B cell (primary cell): ENCODE measurements at regions of chr2 and their contacts with region 1.

Region 1: DNA sequence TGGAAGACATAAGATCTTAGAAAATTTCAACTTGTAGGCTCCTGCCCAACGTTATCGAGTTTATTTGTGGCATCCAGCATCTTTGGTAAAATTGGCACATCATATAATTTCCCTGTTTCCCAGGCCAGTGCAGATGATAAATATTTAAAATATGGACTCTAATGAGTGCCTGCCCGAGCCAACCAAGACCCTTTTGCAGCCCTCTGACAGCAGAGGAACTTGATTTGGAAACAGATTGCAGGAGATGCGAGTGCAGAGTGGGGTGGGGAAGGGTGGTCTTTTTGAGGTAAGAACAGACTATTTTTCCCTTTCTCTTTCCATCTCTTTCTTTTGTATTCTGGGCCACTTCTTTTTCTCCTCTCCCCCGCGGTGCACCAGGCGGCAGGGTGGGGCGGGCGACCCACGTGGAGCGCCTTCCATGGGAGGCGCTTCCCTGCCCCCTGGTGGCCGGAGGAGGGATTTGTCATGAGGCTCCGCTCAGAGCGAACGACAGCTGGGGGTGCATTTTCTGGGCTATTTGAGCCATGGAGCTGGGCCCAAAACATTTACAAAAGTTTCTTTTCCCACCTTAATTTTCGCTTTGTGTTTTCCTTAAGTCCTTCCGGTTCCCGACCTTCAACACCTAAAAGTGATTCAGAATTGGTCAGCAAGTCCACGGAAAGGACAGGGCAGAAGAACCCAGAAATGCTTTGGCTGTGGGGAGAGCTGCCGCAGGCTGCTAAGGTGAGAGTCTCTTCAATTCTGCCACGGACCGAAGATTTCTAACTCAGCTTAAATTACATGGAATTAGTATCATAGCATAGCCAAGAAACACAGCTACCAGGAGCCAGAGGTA is 32.7 kb downstream of the LPIN1 start:
- DNase-seq: peak; percentile 89
- ATAC-seq: peak; percentile 96
- H3K4me3 ChIP-seq: peak overlapping the region in 3 of 5 experiments; percentile 16 to 55 (median 25)
- H3K4me3 Mint-ChIP-seq: peak overlapping the region; percentile 34
- H3K27ac ChIP-seq: no peak overlapping the region
- H3K27ac Mint-ChIP-seq: no peak overlapping the region
- H3K4me1 ChIP-seq: peaks cover 18 to 26% of the 10 kb centered on the region in 2 donors
- H3K4me1 Mint-ChIP-seq: peaks cover 36% of the 10 kb centered on the region
- H3K27me3 ChIP-seq: no peaks in the 10 kb centered on the region
- H3K27me3 Mint-ChIP-seq: no peaks in the 10 kb centered on the region
- CTCF ChIP-seq: peak; percentile 97

Region 2: GRCh38 chr2:11477994-11478393 is 301.1 kb before region 1 on chr2:
- CTCF ChIA-PET with region 1: interaction called, 34 read pairs
- POLR2A ChIA-PET with region 1: no interaction called
- intact Hi-C with region 1: loop called (anchors 1 kb)
- DNase-seq: peak; percentile 82
- ATAC-seq: peak; percentile 54
- H3K4me3 ChIP-seq: no peak overlapping the region
- H3K4me3 Mint-ChIP-seq: no peak overlapping the region
- H3K27ac ChIP-seq: no peak overlapping the region
- H3K27ac Mint-ChIP-seq: no peak overlapping the region
- H3K4me1 ChIP-seq: peaks cover 2 to 10% of the 10 kb centered on the region in 2 donors
- H3K4me1 Mint-ChIP-seq: peaks cover 3% of the 10 kb centered on the region
- H3K27me3 ChIP-seq: peaks cover 0 to 31% (median 5%) of the 10 kb centered on the region in 4 experiments
- H3K27me3 Mint-ChIP-seq: peaks cover 27% of the 10 kb centered on the region
- CTCF ChIP-seq: peak; percentile 97

Region 3: DNA sequence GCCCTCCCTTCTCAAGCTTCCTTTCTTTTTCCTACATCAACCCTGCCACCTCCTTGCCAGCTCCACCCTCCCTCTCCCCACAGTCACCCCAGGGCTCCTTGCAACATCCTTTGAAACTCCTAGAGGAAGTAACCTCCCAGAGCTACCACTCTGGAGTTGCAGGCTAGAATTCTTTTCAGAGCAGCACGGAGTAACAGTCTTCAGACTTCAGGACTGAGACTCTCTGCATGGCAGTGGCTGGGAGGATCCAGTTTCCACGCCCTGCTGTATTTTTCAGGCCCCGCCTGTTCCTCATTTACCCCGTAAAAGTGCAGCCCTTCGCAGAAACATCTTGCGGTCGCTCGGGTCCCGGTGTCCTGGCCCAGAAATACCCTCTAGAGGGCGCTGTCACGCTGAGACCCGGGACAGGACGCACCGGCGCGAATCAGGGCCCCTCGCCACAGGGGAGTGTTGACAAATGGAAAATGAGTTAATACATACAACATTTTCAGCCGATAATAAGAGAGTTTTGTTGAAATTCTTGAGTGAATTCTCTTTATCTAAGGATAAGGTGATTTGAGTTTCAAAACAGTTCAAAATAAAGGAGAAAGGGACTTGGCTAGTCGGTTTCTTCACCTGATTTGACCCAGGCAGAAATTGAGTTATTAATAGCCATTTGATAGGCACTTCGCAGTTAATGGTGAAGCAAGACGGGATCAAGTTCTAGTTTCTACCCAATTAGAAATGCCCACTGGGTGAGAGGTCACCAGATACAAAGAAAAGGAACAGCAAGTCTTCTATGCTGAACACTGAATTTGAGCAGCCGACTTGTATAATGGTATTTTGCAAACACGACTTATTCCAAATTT is 90.7 kb before region 1 on chr2:
- CTCF ChIA-PET with region 1: interaction called, 209 read pairs
- POLR2A ChIA-PET with region 1: interaction called, 4 read pairs
- intact Hi-C with region 1: loop called (anchors 1 kb)
- DNase-seq: peak; percentile 89
- ATAC-seq: peak; percentile 83
- H3K4me3 ChIP-seq: peak overlapping the region in 1 of 5 experiments; percentile 17
- H3K4me3 Mint-ChIP-seq: peak overlapping the region; percentile 67
- H3K27ac ChIP-seq: no peak overlapping the region
- H3K27ac Mint-ChIP-seq: no peak overlapping the region
- H3K4me1 ChIP-seq: peaks cover 11 to 16% of the 10 kb centered on the region in 2 donors
- H3K4me1 Mint-ChIP-seq: peaks cover 8% of the 10 kb centered on the region
- H3K27me3 ChIP-seq: peaks cover 0 to 4% (median 0%) of the 10 kb centered on the region in 4 experiments
- H3K27me3 Mint-ChIP-seq: peaks cover 25% of the 10 kb centered on the region
- CTCF ChIP-seq: peak; percentile 85

Region 4: GRCh38 chr2:11738589-11739436 is 40.3 kb before region 1 on chr2:
- CTCF ChIA-PET with region 1: interaction called, 411 read pairs
- POLR2A ChIA-PET with region 1: no interaction called
- intact Hi-C with region 1: loop called (anchors 1 kb)
- DNase-seq: peak; percentile 46
- ATAC-seq: peak; percentile 63
- H3K4me3 ChIP-seq: no peak overlapping the region
- H3K4me3 Mint-ChIP-seq: no peak overlapping the region
- H3K27ac ChIP-seq: no peak overlapping the region
- H3K27ac Mint-ChIP-seq: no peak overlapping the region
- H3K4me1 ChIP-seq: peaks cover 2 to 5% of the 10 kb centered on the region in 2 donors
- H3K4me1 Mint-ChIP-seq: peaks cover 8% of the 10 kb centered on the region
- H3K27me3 ChIP-seq: peaks cover 0 to 9% (median 8%) of the 10 kb centered on the region in 4 experiments
- H3K27me3 Mint-ChIP-seq: peaks cover 7% of the 10 kb centered on the region
- CTCF ChIP-seq: no peak

Region 5: GRCh38 chr2:11753886-11754699 is 25.0 kb before region 1 on chr2:
- CTCF ChIA-PET with region 1: interaction called, 411 read pairs
- POLR2A ChIA-PET with region 1: interaction called, 3 read pairs
- intact Hi-C with region 1: loop called (anchors 1 kb)
- DNase-seq: no peak
- ATAC-seq: peak; percentile 40
- H3K4me3 ChIP-seq: peak overlapping the region; percentile 6 to 58 (median 46)
- H3K4me3 Mint-ChIP-seq: peak overlapping the region; percentile 94
- H3K27ac ChIP-seq: peak overlapping the region; percentile 71 to 89
- H3K27ac Mint-ChIP-seq: peak overlapping the region; percentile 98
- H3K4me1 ChIP-seq: peaks cover 70 to 94% of the 10 kb centered on the region in 2 donors
- H3K4me1 Mint-ChIP-seq: peaks cover 88% of the 10 kb centered on the region
- H3K27me3 ChIP-seq: no peaks in the 10 kb centered on the region
- H3K27me3 Mint-ChIP-seq: no peaks in the 10 kb centered on the region
- CTCF ChIP-seq: no peak

Region 6: GRCh38 chr2:13006829-13007717 is 1227.9 kb after region 1 on chr2:
- CTCF ChIA-PET with region 1: interaction called, 11 read pairs
- POLR2A ChIA-PET with region 1: no interaction called
- intact Hi-C with region 1: no loop called
- DNase-seq: peak; percentile 77
- ATAC-seq: peak; percentile 49
- H3K4me3 ChIP-seq: no peak overlapping the region
- H3K4me3 Mint-ChIP-seq: no peak overlapping the region
- H3K27ac ChIP-seq: no peak overlapping the region
- H3K27ac Mint-ChIP-seq: no peak overlapping the region
- H3K4me1 ChIP-seq: peaks cover 0 to 3% of the 10 kb centered on the region in 2 donors
- H3K4me1 Mint-ChIP-seq: peaks cover 2% of the 10 kb centered on the region
- H3K27me3 ChIP-seq: no peaks in the 10 kb centered on the region
- H3K27me3 Mint-ChIP-seq: peaks cover 21% of the 10 kb centered on the region
- CTCF ChIP-seq: peak; percentile 96